Ovary (tissue), 10 donors: ENCODE measurements at regions of chr14 and their contacts with region 1.

Region 1: DNA sequence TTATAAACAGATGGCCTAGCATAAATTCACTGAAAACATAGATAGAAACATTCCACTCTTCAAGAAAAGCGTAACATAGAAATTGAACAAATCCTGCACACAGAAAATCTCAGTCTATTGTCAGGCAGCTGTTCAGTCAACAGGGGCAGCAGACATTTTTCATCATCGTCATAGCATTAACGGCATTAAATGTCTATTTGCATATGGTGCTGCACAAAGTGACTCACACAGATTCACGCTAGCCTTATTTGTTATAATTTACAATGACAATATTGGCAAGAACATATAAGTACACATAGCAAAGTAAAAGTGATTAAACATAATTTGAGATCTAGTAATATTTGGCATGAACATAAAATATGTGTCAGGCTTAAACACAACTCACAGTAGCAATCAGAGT is 95.7 kb downstream of the CEP128 start:
- DNase-seq: no peak
- H3K4me3 ChIP-seq: no peak overlapping the region
- H3K27ac ChIP-seq: no peak overlapping the region
- H3K4me1 ChIP-seq: peaks cover 2% of the 10 kb centered on the region
- H3K27me3 ChIP-seq: no peaks in the 10 kb centered on the region
- CTCF ChIP-seq: no peak
- EP300 ChIP-seq: no peak
- POLR2A ChIP-seq: no peak

Region 2: GRCh38 chr14:80047761-80048160 is 798.1 kb before region 1 on chr14:
- intact Hi-C with region 1: loop called in 1 of 4 experiments (anchors 5 kb)
- DNase-seq: no peak
- H3K4me3 ChIP-seq: no peak overlapping the region
- H3K27ac ChIP-seq: no peak overlapping the region
- H3K4me1 ChIP-seq: no peaks in the 10 kb centered on the region
- H3K27me3 ChIP-seq: no peaks in the 10 kb centered on the region
- CTCF ChIP-seq: no peak
- EP300 ChIP-seq: no peak
- POLR2A ChIP-seq: no peak